BJ (cell line): ENCODE measurements at regions of chr6 and their contacts with region 1.

Region 1: GRCh38 chr6:29577544-29577943 is 7.4 kb upstream of the OR2H2 start:
- DNase-seq: no peak
- H3K4me3 ChIP-seq: no peak overlapping the region
- H3K27me3 ChIP-seq: no peaks in the 10 kb centered on the region
- CTCF ChIP-seq: no peak

Region 2: GRCh38 chr6:28200020-28200419 is 1377.5 kb before region 1 on chr6:
- CTCF ChIA-PET with region 1: no interaction called
- POLR2A ChIA-PET with region 1: no interaction called
- DNase-seq: no peak
- H3K4me3 ChIP-seq: no peak overlapping the region
- H3K27me3 ChIP-seq: peaks cover 5% of the 10 kb centered on the region
- CTCF ChIP-seq: no peak

Region 3: GRCh38 chr6:29564875-29565274 is 12.7 kb before region 1 on chr6:
- CTCF ChIA-PET with region 1: no interaction called
- POLR2A ChIA-PET with region 1: no interaction called
- DNase-seq: no peak
- H3K4me3 ChIP-seq: no peak overlapping the region
- H3K27me3 ChIP-seq: no peaks in the 10 kb centered on the region
- CTCF ChIP-seq: no peak

Region 4: GRCh38 chr6:29589423-29590048 is 12.0 kb after region 1 on chr6:
- CTCF ChIA-PET with region 1: interaction called, 16 read pairs
- POLR2A ChIA-PET with region 1: no interaction called
- DNase-seq: no peak
- H3K4me3 ChIP-seq: no peak overlapping the region
- H3K27me3 ChIP-seq: no peaks in the 10 kb centered on the region; the same call in 1 of the 2 replicates
- CTCF ChIP-seq: peak; percentile 88